Naive thymus-derived CD8-positive, alpha-beta T cell (primary cell): ENCODE measurements at regions of chr19 and their contacts with region 1.

Region 1: DNA sequence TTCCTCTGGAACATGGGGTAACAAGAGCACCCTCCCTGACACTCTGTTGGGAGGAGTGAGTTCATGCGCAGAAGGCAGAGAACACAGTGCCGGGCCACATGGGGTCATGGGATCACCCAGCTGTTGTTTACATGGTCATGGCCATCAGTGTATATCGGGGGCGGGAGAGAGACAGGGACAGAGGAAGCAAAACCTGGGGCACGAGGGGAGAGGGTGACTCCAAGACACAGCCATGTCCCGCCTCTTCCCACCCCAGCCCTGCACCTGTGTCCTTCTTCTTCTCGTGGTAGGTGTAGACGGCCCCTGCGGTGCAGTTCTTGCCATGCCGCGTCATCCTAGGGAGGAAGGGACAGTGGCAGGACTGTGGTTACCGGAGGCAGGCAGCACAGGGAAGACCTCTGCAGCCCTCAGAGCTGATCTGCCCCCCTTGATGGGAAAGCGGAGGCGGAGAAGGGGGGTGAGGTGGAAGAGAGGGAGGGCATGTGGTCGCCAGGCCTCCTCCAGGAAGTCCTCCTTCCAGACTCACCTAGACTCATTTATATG is 19.9 kb downstream of the NOSIP start:
- DNase-seq: peak in 7 of 10 donors; percentile 35 to 72 (median 47)
- ATAC-seq: peak; percentile 6 to 18
- H3K4me3 Mint-ChIP-seq: peak overlapping the region; percentile 88 to 99 (median 93)
- H3K27ac Mint-ChIP-seq: peak overlapping the region; percentile 88 to 99 (median 97)
- H3K4me1 Mint-ChIP-seq: peaks cover 45 to 84% (median 77%) of the 10 kb centered on the region in 4 donors
- H3K27me3 Mint-ChIP-seq: no peaks in the 10 kb centered on the region

Region 2: GRCh38 chr19:49487277-49488045 is 73.0 kb before region 1 on chr19 and contains the start of gene RPL13A:
- POLR2A ChIA-PET with region 1: interaction called, 10 read pairs
- DNase-seq: peak; percentile 98 to 100 (median 99)
- ATAC-seq: peak; percentile 85 to 91
- H3K4me3 Mint-ChIP-seq: peak within 1 kb of the TSS; percentile 89 to 99 (median 97)
- H3K27ac Mint-ChIP-seq: peak within 1 kb of the TSS; percentile 94 to 99 (median 97)
- H3K4me1 Mint-ChIP-seq: peaks cover 9 to 57% (median 45%) of the 10 kb centered on the region in 4 donors
- H3K27me3 Mint-ChIP-seq: peaks cover 0 to 3% (median 0%) of the 10 kb centered on the region in 5 donors
- polyA plus RNA-seq, gene RPL13A: 3,162 to 3,664 (median 3,630) TPM

Region 3: DNA sequence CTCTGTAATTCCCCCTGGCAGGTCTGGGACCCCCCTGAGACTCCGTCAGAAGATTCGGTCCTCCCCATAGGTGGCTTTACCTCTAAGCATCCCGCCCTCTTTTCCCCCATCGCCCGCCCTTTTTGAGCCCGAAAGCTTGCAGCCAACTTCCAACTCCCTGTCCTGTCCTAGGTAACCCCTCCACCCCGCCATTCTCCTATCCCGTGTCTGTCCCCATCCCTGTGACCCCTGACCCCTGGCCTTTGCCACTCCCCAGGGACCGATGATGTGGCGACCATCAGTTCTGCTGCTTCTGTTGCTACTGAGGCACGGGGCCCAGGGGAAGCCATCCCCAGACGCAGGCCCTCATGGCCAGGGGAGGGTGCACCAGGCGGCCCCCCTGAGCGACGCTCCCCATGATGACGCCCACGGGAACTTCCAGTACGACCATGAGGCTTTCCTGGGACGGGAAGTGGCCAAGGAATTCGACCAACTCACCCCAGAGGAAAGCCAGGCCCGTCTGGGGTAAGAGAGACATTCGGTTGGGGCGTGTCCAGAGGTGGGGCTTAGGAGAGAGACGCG is 32.1 kb before region 1 on chr19:
- POLR2A ChIA-PET with region 1: interaction called, 11 read pairs
- DNase-seq: no peak
- ATAC-seq: peak in 1 of 2 donors; percentile 4
- H3K4me3 Mint-ChIP-seq: peak overlapping the region; percentile 73 to 97 (median 84)
- H3K27ac Mint-ChIP-seq: peak overlapping the region in 6 of 10 donors; percentile 25 to 88 (median 81)
- H3K4me1 Mint-ChIP-seq: peaks cover 16 to 36% (median 25%) of the 10 kb centered on the region in 4 donors
- H3K27me3 Mint-ChIP-seq: no peaks in the 10 kb centered on the region

Region 4: DNA sequence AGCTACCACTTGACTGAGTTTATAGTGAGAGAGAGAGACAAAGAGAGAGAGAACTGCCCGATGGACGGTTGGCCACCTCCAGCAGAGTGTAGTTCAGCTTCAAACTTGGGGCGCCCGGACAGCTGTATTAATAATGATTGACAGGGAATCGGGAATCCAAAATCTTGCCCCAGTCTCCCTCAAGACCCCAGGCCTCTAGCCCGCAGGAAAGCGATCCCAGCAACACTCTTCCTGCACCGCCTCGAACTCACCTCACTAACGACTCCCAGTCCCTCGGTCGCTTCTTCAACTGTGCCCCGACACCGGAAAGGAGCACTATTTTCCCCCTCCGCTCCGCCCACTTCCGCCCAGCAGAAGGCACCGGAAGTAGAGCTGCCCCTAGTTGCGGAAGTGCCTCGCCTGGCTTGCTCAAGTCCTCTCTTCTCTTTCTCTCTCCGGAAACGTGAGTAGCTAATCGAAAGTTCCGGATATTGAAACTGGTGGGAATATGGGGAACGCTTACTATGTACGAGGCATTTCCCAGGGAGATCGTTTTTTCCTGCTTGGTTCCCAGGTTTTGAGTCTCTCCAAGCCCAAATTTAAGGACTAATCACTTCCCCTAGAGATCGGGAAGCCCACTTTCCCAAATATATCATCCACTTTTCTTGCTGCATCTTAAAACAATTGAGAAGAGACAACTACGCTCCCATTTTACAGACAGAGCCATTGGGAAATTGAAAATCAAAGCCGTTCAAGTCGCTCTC is 20.0 kb after region 1 on chr19 and contains the start of gene NOSIP:
- POLR2A ChIA-PET with region 1: interaction called, 757 read pairs
- DNase-seq: peak; percentile 88 to 98 (median 96)
- ATAC-seq: peak; percentile 98 to 99
- H3K4me3 Mint-ChIP-seq: peak within 1 kb of the TSS; percentile 90 to 98 (median 94)
- H3K27ac Mint-ChIP-seq: peak within 1 kb of the TSS; percentile 89 to 97 (median 93)
- H3K4me1 Mint-ChIP-seq: peaks cover 14 to 44% (median 36%) of the 10 kb centered on the region in 4 donors
- H3K27me3 Mint-ChIP-seq: no peaks in the 10 kb centered on the region
- polyA plus RNA-seq, gene NOSIP: 662 to 854 (median 844) TPM

Region 5: DNA sequence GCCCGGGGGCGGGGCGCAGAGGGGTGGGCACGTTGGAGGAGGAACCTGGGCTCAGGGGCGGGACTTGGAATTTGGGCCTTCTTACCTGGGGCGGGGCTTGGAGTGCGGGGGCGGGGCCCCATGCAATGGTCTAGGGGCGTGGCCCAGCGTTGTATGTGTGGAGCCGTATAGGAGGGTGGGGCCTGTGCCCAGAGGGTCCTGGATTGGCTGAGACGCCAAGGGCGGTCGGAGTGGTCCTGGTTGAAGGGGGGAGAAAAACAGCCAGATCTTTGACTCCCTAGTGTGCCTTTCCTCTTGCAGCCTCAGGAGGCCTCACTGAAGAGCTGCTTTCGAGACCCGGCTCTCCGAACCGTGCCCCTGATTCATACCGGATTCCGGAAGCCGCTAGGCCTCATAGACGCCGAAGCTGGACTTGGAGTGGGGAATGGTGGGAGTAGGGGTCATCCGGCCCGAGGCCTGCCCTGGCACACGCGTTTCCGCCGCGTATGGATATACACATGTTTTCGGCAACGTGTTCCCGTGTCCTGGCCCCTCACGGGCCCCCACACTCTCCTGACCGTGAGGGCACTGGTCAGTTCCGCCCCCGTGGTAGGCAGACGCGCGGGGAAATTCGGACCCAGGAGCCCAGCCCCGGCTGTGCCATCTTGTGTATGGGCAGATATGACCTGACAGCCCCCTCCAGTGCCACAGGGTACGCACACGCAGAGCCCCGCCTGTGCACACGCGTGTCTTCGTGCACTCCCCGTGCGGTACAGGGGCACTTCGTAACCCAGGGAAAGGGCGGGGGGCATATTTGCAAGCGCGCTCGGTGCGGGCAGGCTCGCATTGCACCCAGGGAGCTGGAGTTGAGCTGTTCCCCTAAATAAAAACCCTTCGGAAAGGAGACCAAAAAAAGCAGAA is 29.9 kb after region 1 on chr19:
- POLR2A ChIA-PET with region 1: interaction called, 10 read pairs
- DNase-seq: peak; percentile 89 to 99 (median 98)
- ATAC-seq: peak; percentile 78 to 82
- H3K4me3 Mint-ChIP-seq: peak overlapping the region; percentile 86 to 97 (median 92)
- H3K27ac Mint-ChIP-seq: peak overlapping the region; percentile 34 to 97 (median 92)
- H3K4me1 Mint-ChIP-seq: peaks cover 22 to 46% (median 34%) of the 10 kb centered on the region in 4 donors
- H3K27me3 Mint-ChIP-seq: no peaks in the 10 kb centered on the region

Region 6: DNA sequence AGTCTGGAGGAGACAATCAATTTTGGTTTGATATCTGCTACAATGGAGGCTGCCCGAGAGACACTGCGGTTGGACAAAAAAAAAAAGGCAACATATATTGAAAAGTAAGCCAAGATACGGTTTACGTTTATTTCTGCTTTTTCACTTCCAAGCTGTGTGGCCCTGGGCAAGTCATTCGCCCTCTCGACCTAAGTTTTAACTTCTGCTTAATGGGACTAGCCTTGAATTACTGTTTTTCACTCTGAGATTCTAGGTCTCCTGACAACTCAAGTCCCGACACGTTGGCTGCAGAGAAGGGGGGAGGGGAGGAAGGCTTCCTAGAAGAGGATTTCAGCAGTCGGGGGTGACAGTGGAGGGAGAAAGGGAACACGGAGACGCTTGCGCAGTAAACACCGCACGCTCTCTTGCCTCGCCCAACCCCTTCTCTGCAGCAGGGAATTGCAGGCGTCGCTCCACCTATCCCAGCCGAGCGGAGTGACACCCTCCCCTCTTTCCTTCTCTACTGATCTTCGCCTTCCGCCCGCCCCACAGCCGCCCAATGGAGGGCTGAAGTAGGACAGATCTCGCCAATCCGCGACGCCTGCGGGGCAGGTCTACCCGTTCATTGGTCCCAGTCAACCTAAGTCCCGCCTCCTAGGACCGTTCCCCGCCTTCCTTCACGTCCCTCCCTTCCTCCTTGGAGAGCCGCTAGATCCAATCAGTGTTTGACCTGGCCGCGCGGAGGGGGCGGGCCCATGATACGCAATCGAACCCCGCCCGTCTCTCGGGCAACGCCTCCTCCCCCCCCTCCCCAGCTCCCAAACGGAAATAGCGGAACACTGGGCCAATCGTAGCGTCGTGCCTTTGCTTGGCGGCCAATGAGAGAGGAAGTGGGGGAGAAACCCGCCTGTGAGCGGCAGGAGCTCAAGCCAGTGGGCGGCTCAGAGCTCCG is 205.8 kb after region 1 on chr19:
- POLR2A ChIA-PET with region 1: no interaction called
- DNase-seq: peak; percentile 95 to 100 (median 99)
- ATAC-seq: peak; percentile 88 to 90
- H3K4me3 Mint-ChIP-seq: peak overlapping the region; percentile 77 to 96 (median 92)
- H3K27ac Mint-ChIP-seq: peak overlapping the region; percentile 87 to 97 (median 96)
- H3K4me1 Mint-ChIP-seq: peaks cover 31 to 42% (median 36%) of the 10 kb centered on the region in 4 donors
- H3K27me3 Mint-ChIP-seq: peaks cover 0 to 4% (median 0%) of the 10 kb centered on the region in 5 donors